ENCODE measurements at regions of chr9 and their contacts with region 1.

Region 1: DNA sequence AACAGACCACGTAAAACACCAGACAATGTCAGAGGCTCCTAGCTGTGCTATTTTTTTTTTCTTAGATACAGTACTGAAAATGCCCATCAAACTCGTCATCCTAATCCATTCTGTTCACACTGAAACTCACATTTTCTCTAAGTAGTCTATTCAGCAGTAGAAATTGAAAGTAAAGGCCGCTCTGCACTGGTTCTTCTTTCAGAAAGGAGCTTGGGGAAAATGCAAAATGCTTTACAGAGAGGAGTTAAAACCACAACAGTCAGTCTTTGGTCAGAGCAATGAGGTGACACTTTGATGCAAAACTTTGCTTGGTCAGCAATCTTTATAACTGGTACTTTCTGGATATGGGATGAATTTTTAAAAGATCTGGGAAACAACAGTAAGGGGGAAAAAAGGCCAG is 43.8 kb upstream of the SUSD1 start:
- DNase-seq: peak; percentile 11
- H3K4me3 Mint-ChIP-seq: no peak overlapping the region
- H3K27ac Mint-ChIP-seq: no peak overlapping the region
- H3K4me1 Mint-ChIP-seq: peaks cover 22% of the 10 kb centered on the region
- H3K27me3 Mint-ChIP-seq: no peaks in the 10 kb centered on the region

Region 2: GRCh38 chr9:112249277-112249676 is 30.4 kb after region 1 on chr9:
- CTCF ChIA-PET with region 1: interaction called, 3 read pairs
- intact Hi-C with region 1: loop called (anchors 2 kb)
- DNase-seq: no peak
- H3K4me3 Mint-ChIP-seq: no peak overlapping the region
- H3K27ac Mint-ChIP-seq: no peak overlapping the region
- H3K4me1 Mint-ChIP-seq: peaks cover 23% of the 10 kb centered on the region
- H3K27me3 Mint-ChIP-seq: no peaks in the 10 kb centered on the region

Measured in activated naive CD4-positive, alpha-beta T cell treated with anti-CD3 and anti-CD28 coated beads for 36 hours (primary cell).